ENCODE measurements at regions of chr4 and their contacts with region 1.

Region 1: DNA sequence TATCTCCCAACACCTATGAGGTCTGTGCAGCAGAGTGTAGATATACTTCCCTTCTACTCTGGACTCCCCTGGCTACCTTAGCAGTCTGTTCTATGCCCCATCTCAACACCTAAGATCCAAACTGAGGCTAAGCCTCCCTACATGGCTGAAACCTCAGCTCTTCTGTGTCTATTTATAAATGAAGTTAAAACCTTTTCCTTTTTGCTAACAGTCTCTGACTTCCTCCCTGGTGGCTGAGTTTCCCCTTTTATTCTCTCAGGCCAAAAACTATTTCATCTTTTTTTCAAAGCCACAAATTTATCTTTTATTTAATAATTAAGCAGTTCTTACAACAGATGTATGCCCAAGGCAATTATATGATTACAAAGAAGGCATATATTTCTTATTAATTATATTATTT is 111.8 kb upstream of the STIM2 start:
- DNase-seq: no peak
- CTCF ChIP-seq: no peak

Region 2: DNA sequence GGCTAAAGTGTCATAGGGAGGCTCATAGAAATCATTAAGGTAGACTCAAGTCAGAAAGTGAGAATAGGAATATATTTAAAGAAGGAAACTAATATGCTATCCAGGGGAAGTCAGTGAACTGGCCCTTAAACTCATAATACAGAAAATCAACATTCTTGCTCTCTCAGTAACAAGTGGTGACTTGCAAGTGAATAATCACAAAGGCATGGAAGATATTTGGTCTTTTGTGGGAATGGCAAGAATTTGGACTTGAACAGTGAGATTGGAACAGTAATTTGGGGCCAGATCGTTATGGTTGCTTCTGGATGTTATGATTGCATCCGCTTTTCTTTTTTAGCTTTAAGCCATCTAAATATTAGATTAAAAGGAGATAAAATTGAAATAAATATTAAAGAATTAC is 61.1 kb before region 1 on chr4:
- CTCF ChIA-PET with region 1: no interaction called
- POLR2A ChIA-PET with region 1: no interaction called
- DNase-seq: no peak
- CTCF ChIP-seq: no peak

Region 3: GRCh38 chr4:26719954-26720552 is 28.8 kb before region 1 on chr4:
- CTCF ChIA-PET with region 1: interaction called, 12 read pairs
- POLR2A ChIA-PET with region 1: no interaction called
- DNase-seq: no peak
- CTCF ChIP-seq: peak; percentile 28